Ascending aorta (tissue), 2 donors: ENCODE measurements at regions of chr15 and their contacts with region 1.

Region 1: DNA sequence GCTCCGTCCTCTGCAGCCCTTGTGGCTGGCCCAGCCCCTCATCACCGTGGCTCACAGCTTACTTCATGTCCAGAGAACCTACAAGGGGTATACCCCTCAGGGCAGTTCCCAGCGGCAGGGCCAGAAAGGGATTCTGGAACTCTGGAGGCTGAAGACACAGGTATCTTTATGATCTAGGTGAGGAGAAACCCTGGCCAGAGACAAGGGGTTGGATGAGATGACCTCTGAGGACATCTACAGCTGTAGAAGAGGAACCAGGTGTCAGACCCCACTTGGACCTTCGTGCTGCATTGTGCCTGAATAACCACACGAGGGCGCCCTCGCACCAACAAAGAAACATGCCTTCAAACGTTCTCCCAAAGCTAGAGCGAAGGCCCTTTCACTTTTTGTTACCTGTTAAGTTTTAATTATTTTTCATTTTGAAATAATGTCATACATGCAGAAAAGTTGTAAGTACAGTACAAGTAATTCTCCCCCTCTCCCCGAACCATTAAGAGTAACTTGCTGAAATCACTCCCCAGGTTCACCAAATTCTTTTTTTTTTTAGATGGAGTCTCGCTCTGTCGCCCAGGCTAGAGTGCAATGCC is 118.7 kb upstream of the SMAD3 start:
- DNase-seq: peak in 1 of 2 donors; percentile 88
- H3K4me3 ChIP-seq: no peak overlapping the region
- H3K27ac ChIP-seq: no peak overlapping the region
- H3K4me1 ChIP-seq: peaks cover 0 to 3% of the 10 kb centered on the region in 2 donors
- H3K27me3 ChIP-seq: no peaks in the 10 kb centered on the region
- CTCF ChIP-seq: peak; percentile 88 to 93 (median 90)

Region 2: GRCh38 chr15:66730168-66731021 is 216.3 kb before region 1 on chr15:
- intact Hi-C with region 1: no loop called
- DNase-seq: peak in 1 of 2 donors; percentile 79
- H3K4me3 ChIP-seq: peak overlapping the region in 1 of 2 donors; percentile 53
- H3K27ac ChIP-seq: peak overlapping the region; percentile 82 to 84
- H3K4me1 ChIP-seq: peaks cover 13 to 52% of the 10 kb centered on the region in 2 donors
- H3K27me3 ChIP-seq: no peaks in the 10 kb centered on the region
- CTCF ChIP-seq: no peak

Region 3: DNA sequence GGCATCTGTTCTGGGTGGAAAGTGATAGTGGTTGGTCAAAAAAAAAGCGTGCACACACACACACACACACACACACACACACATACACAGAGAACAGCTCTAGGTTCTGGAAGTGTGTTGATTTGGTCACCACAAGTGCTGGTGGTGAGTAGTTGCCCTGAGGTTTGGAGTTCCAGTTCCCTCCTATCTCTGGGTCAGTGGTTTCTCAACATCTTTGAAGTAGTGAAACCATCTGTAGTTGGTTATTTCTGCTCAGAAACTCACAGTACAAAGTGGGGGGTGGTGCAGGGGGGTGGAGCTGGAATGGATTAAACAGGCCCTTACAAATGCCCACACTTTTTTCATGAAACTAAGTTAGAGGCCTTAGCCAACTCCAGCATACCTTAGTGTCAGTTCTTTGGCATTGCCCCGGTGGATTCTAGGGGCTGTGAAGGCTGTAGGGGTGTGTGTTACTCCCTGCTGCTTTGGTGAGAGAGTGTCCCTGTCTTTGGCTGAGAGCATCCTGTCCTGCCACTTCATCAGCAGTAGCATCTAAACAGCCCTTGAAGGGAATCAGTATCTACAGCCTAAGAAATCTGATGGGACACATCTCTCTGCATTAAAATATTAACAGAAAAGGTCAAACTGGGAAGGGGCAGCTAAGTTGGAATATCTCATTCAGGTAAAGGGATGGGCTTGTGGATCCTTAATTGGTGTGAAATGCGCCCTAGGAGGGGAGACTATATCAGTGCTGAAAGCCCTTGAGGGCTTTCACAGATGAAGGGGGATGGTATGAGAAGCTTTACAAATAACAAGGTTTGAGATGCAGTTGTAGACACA is 139.4 kb after region 1 on chr15:
- intact Hi-C with region 1: loop called (anchors 5 kb)
- DNase-seq: no peak
- H3K4me3 ChIP-seq: no peak overlapping the region
- H3K27ac ChIP-seq: no peak overlapping the region
- H3K4me1 ChIP-seq: peaks cover 15 to 78% of the 10 kb centered on the region in 2 donors
- H3K27me3 ChIP-seq: no peaks in the 10 kb centered on the region
- CTCF ChIP-seq: no peak

Region 4: DNA sequence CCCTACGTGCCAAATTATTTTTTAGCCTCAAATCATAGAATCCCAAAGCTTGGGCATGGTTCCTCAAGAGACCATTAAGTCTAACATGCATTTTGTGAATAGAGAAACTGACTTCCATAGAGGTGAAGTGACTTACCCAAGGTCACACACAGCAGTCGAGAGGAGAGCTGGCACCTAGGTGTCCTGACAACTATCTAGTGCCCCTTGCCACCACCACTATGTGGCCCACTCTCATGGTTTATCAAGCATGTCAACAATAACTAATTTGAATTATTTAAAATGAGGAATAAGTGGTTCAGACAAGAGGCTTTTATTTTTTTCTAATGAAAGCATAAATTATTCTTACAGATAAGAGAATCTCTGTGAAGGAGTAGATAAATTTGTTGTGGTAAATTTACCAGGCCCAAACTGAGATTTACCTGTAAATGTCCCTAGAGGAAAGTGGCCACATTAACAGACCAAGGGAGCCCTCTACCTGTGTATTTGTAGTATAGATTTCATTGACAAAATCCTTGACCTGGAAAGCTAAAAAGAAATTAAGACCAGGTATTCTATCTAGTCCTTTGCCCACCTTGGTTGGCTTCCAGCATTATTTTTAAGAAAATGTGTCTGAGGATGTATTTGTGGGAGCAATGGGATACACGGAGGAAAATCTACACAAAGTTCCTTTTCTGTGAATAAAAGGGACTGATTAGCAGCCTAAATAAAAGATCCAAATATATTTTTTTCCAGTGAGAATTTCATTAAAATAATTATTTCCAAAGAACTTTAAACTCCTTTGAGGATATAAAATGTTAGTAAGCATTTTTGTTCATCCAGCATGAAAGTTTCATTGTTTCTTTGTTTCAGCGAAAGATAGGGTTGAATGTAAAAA is 357.1 kb after region 1 on chr15:
- intact Hi-C with region 1: loop called (anchors 1 kb)
- DNase-seq: no peak
- H3K4me3 ChIP-seq: no peak overlapping the region
- H3K27ac ChIP-seq: no peak overlapping the region
- H3K4me1 ChIP-seq: no peaks in the 10 kb centered on the region
- H3K27me3 ChIP-seq: no peaks in the 10 kb centered on the region
- CTCF ChIP-seq: peak in 2 of 3 experiments; percentile 41 to 50

Region 5: GRCh38 chr15:67433495-67434099 is 486.9 kb after region 1 on chr15:
- intact Hi-C with region 1: loop called (anchors 1 kb)
- DNase-seq: no peak
- H3K4me3 ChIP-seq: no peak overlapping the region
- H3K27ac ChIP-seq: no peak overlapping the region
- H3K4me1 ChIP-seq: no peaks in the 10 kb centered on the region
- H3K27me3 ChIP-seq: no peaks in the 10 kb centered on the region
- CTCF ChIP-seq: peak; percentile 59 to 80 (median 74)